BJ (cell line): ENCODE measurements at regions of chr18 and their contacts with region 1.

Region 1: DNA sequence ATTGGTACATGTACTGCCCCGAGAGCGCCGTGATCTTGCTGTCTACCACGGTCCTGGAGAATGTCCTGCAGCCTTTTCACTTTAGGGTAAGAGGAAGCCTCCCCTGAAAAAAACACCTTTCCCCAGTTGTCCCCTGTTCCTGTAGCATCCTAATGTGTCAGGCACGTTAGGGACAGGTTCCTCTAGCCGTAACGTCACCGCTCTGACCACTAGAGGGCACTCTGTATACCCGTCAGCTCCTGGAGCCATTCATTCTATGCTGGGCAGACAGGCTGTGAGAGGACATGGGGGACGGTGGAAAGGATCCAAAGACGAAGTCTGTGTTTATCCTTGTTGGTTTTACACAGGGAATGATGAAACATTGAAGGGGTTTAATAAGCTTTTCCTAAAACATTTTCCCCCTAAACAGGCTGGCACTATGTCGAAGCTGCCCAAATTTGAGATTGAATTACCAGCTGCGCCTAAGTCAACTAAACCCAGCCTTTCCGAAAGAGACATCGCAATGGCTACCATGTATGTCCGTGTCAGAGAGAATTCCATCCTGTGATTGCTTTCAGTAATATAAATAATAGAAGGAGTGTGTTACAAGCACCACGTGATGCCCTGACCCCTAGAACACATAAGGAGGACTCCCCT is 12.7 kb downstream of the RMC1 start:
- DNase-seq: no peak
- H3K4me3 ChIP-seq: no peak overlapping the region
- H3K27me3 ChIP-seq: no peaks in the 10 kb centered on the region
- CTCF ChIP-seq: peak; percentile 95

Region 2: DNA sequence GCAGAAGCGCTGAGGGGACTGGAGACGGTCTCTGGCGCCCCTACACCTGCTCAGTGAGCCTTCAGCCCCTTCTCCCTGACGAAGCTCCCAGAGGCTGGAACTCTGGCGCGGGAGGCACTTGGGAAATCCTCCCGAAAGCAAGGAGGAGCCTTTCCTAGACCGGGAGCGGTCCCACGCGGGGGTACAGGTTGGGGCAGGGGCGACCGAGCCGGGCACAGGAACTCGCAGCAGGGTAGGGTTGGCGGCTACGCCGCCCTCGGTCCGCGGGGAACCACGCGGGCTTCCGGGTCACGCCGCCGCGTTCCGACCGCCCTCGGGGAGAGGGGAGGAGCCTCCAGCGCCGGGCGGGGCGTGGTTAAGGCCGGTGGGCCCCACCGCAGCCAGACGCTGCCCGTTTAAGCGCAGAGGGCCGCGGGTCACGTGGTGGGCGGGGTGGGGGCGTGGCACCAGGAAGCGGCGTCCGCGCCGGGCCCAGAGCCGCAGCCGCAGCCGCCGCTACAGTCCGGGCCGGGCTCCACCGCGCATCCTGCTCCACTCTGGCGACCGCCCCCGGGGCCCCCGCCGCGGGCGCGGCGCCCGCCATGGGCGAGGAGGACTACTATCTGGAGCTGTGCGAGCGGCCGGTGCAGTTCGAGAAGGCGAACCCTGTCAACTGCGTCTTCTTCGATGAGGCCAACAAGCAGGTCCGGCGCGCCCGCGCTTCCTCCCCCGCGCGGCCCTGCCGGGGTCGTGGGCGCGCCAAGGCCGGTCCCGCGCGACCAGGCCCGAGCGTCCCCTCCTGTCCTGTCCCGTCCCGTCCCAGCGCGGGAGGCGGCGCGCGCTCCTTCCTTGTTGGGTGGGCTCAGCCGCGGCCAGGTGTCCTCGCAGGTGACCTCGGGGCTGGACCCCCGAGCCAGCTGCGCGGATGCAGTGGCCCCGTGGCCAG is 12.7 kb before region 1 on chr18 and contains the start of gene RMC1:
- CTCF ChIA-PET with region 1: interaction called, 19 read pairs
- POLR2A ChIA-PET with region 1: no interaction called
- DNase-seq: no peak
- H3K4me3 ChIP-seq: peak within 1 kb of the TSS; percentile 91
- H3K27me3 ChIP-seq: no peaks in the 10 kb centered on the region
- CTCF ChIP-seq: no peak
- polyA plus RNA-seq, gene RMC1: 10.8 and 15.1 TPM in 2 replicates

Region 3: GRCh38 chr18:23529597-23529996 is 13.6 kb after region 1 on chr18:
- CTCF ChIA-PET with region 1: interaction called, 13 read pairs
- POLR2A ChIA-PET with region 1: no interaction called
- DNase-seq: no peak
- H3K4me3 ChIP-seq: no peak overlapping the region
- H3K27me3 ChIP-seq: no peaks in the 10 kb centered on the region
- CTCF ChIP-seq: no peak

Region 4: GRCh38 chr18:23578891-23579653 is 63.0 kb after region 1 on chr18:
- CTCF ChIA-PET with region 1: interaction called, 11 read pairs
- POLR2A ChIA-PET with region 1: no interaction called
- DNase-seq: no peak
- H3K4me3 ChIP-seq: no peak overlapping the region
- H3K27me3 ChIP-seq: no peaks in the 10 kb centered on the region
- CTCF ChIP-seq: no peak

Region 5: GRCh38 chr18:23586249-23587196 is 70.5 kb after region 1 on chr18 and contains the start of gene NPC1:
- CTCF ChIA-PET with region 1: interaction called, 16 read pairs
- POLR2A ChIA-PET with region 1: no interaction called
- DNase-seq: peak; percentile 75
- H3K4me3 ChIP-seq: peak within 1 kb of the TSS; percentile 84
- H3K27me3 ChIP-seq: no peaks in the 10 kb centered on the region
- CTCF ChIP-seq: peak; percentile 84
- polyA plus RNA-seq, gene NPC1: 34.2 and 54.5 TPM in 2 replicates